Activated B cell treated with CpG ODN at 0.5 μM for 24 hours (primary cell): ENCODE measurements at regions of chr20 and their contacts with region 1.

Region 1: GRCh38 chr20:63641792-63642544 is 11.3 kb downstream of the STMN3 start:
- DNase-seq: peak; percentile 92
- ATAC-seq: peak; percentile 76
- H3K4me3 Mint-ChIP-seq: peak overlapping the region; percentile 78
- H3K27ac Mint-ChIP-seq: peak overlapping the region; percentile 71
- H3K4me1 Mint-ChIP-seq: peaks cover 35% of the 10 kb centered on the region
- H3K27me3 Mint-ChIP-seq: no peaks in the 10 kb centered on the region
- CTCF ChIP-seq: no peak

Region 2: DNA sequence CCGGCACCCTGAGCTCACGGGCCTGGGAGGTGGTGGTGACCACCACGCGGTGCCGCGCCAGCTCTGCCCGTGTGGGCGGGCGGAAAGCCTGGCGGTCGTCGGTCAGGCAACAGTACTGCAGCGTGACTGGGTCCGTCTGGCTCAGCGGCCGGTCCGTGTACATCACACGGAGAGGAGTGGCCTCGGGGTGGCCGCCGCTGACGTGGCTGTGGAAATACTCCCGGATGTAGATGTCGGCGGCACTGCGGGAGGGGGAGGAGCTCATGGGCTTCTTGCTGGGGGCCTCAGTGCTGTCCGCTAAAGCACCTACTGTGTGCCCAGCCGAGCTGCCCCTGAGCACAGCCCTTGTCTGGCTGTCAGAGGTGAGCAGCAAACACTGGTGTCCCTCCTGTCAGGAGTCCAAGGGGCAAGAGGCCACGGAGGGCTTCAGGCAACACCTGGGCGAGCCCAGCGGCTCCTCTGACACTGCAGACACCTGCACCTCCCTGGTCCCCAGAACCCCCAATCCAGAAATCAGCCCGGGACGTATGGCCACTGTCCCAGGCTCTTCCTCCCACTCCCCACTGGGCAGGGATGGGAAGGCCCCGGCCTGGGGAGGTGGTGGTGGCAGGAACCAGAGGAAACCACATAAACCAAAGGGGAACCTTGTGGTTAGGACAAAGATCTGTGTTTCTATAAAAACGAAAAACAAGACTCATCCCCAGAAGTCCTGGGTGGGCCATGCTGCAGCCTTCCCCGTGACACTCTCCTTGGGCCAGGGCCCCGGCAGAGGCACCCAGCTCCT is 74.4 kb before region 1 on chr20:
- CTCF ChIA-PET with region 1: interaction called, 3 read pairs
- POLR2A ChIA-PET with region 1: interaction called, 15 read pairs
- intact Hi-C with region 1: no loop called
- DNase-seq: peak; percentile 62
- ATAC-seq: peak; percentile 76
- H3K4me3 Mint-ChIP-seq: peak overlapping the region; percentile 68
- H3K27ac Mint-ChIP-seq: peak overlapping the region; percentile 75
- H3K4me1 Mint-ChIP-seq: peaks cover 31% of the 10 kb centered on the region
- H3K27me3 Mint-ChIP-seq: no peaks in the 10 kb centered on the region
- CTCF ChIP-seq: no peak

Region 3: GRCh38 chr20:63580796-63581461 is 61.0 kb before region 1 on chr20:
- CTCF ChIA-PET with region 1: interaction called, 18 read pairs
- POLR2A ChIA-PET with region 1: interaction called, 3 read pairs
- intact Hi-C with region 1: loop called (anchors 2 kb)
- DNase-seq: no peak
- ATAC-seq: peak; percentile 98
- H3K4me3 Mint-ChIP-seq: no peak overlapping the region
- H3K27ac Mint-ChIP-seq: no peak overlapping the region
- H3K4me1 Mint-ChIP-seq: peaks cover 5% of the 10 kb centered on the region
- H3K27me3 Mint-ChIP-seq: peaks cover 2% of the 10 kb centered on the region
- CTCF ChIP-seq: no peak

Region 4: GRCh38 chr20:63657937-63658748 is 16.2 kb after region 1 on chr20 and contains the start of gene RTEL1:
- CTCF ChIA-PET with region 1: interaction called, 19 read pairs
- POLR2A ChIA-PET with region 1: interaction called, 24 read pairs
- intact Hi-C with region 1: loop called (anchors 1 kb)
- DNase-seq: peak; percentile 95
- ATAC-seq: peak; percentile 88
- H3K4me3 Mint-ChIP-seq: peak within 1 kb of the TSS; percentile 97
- H3K27ac Mint-ChIP-seq: peak within 1 kb of the TSS; percentile 93
- H3K4me1 Mint-ChIP-seq: peaks cover 27% of the 10 kb centered on the region
- H3K27me3 Mint-ChIP-seq: peaks cover 3% of the 10 kb centered on the region
- CTCF ChIP-seq: no peak
- total RNA-seq, gene RTEL1: 24.1 and 33.8 TPM in 2 replicates

Region 5: DNA sequence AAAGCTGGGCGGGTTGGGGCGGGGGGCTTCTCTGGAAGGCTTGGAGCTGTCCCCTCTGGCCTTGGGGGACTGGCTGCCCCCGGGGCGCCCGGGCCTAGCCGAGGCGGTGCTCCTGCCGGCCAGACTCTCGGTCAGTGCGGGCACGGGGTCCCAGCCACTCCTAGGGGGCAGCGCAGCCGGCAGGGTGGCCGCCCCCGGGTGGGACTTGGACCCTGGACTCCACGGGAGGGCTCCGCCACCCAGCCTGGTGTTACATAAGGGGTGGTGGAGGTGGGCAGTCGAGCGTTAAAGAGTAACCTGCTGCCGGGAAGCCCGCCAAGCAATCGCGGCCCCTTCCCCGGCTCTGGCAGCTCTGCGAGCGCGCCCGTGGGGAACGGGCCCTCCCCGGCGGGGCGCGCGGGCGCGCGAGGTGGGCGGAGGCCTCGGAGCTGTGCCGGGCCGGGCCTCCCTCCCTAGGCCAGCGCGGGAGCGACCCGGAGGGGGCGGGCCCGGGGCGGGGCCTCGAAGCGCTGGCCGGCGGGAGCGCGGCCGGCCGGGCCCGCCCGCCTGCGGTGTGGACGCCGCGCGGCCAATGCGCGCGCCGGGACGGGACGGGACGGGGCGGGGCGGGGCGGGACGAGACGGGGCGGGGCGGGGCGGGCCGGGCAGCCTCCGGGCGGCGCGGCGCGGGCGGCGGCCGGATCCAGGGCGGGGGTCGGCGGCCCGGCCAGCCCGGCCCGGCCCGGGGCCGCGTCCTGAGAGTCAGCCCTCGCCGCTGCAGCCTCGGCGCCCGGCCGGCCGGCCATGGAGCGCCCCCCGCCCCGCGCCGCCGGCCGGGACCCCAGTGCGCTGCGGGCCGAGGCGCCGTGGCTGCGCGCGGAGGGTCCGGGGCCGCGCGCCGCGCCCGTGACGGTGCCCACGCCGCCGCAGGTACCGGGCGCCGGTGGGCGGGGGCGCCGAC is 97.4 kb after region 1 on chr20 and contains the start of gene SLC2A4RG:
- CTCF ChIA-PET with region 1: interaction called, 3 read pairs
- POLR2A ChIA-PET with region 1: interaction called, 11 read pairs
- intact Hi-C with region 1: no loop called
- DNase-seq: peak; percentile 73
- ATAC-seq: peak; percentile 65
- H3K4me3 Mint-ChIP-seq: peak within 1 kb of the TSS; percentile 48
- H3K27ac Mint-ChIP-seq: no peak within 1 kb of the TSS
- H3K4me1 Mint-ChIP-seq: peaks cover 28% of the 10 kb centered on the region
- H3K27me3 Mint-ChIP-seq: no peaks in the 10 kb centered on the region
- CTCF ChIP-seq: no peak
- total RNA-seq, gene SLC2A4RG: 20.9 and 28.1 TPM in 2 replicates

Region 6: GRCh38 chr20:63930971-63931553 is 289.1 kb after region 1 on chr20:
- CTCF ChIA-PET with region 1: no interaction called
- POLR2A ChIA-PET with region 1: no interaction called
- intact Hi-C with region 1: no loop called
- DNase-seq: no peak
- ATAC-seq: no peak
- H3K4me3 Mint-ChIP-seq: no peak overlapping the region
- H3K27ac Mint-ChIP-seq: no peak overlapping the region
- H3K4me1 Mint-ChIP-seq: no peaks in the 10 kb centered on the region
- H3K27me3 Mint-ChIP-seq: no peaks in the 10 kb centered on the region
- CTCF ChIP-seq: no peak